Activated CD8-positive, alpha-beta memory T cell treated with anti-CD3 and anti-CD28 coated beads, Interleukin-2, amount 10 ng/mL, durations not matched to agents 7 days and 5 days (primary cell): ENCODE measurements at regions of chr9 and their contacts with region 1.

Region 1: GRCh38 chr9:115013998-115014397 is 83.6 kb upstream of the TNFSF8 start:
- DNase-seq: peak; percentile 88
- ATAC-seq: peak; percentile 97
- H3K4me3 Mint-ChIP-seq: no peak overlapping the region
- H3K27ac Mint-ChIP-seq: peak overlapping the region; percentile 47
- H3K4me1 Mint-ChIP-seq: peaks cover 37% of the 10 kb centered on the region
- H3K27me3 Mint-ChIP-seq: peaks cover 22% of the 10 kb centered on the region

Region 2: GRCh38 chr9:114674798-114675540 is 339.0 kb before region 1 on chr9:
- CTCF ChIA-PET with region 1: interaction called, 186 read pairs
- DNase-seq: no peak
- ATAC-seq: no peak
- H3K4me3 Mint-ChIP-seq: no peak overlapping the region
- H3K27ac Mint-ChIP-seq: no peak overlapping the region
- H3K4me1 Mint-ChIP-seq: peaks cover 25% of the 10 kb centered on the region
- H3K27me3 Mint-ChIP-seq: peaks cover 20% of the 10 kb centered on the region

Region 3: GRCh38 chr9:114738581-114739316 is 275.2 kb before region 1 on chr9:
- CTCF ChIA-PET with region 1: interaction called, 135 read pairs
- DNase-seq: peak; percentile 84
- ATAC-seq: peak; percentile 83
- H3K4me3 Mint-ChIP-seq: no peak overlapping the region
- H3K27ac Mint-ChIP-seq: peak overlapping the region; percentile 89
- H3K4me1 Mint-ChIP-seq: peaks cover 58% of the 10 kb centered on the region
- H3K27me3 Mint-ChIP-seq: peaks cover 5% of the 10 kb centered on the region

Region 4: GRCh38 chr9:114830546-114830945 is 183.5 kb before region 1 on chr9:
- CTCF ChIA-PET with region 1: no interaction called
- DNase-seq: no peak
- ATAC-seq: no peak
- H3K4me3 Mint-ChIP-seq: no peak overlapping the region
- H3K27ac Mint-ChIP-seq: no peak overlapping the region
- H3K4me1 Mint-ChIP-seq: peaks cover 10% of the 10 kb centered on the region
- H3K27me3 Mint-ChIP-seq: peaks cover 13% of the 10 kb centered on the region

Region 5: GRCh38 chr9:114930056-114930812 is 83.8 kb before region 1 on chr9 and contains the start of gene TNFSF8:
- CTCF ChIA-PET with region 1: interaction called, 14 read pairs
- DNase-seq: peak; percentile 91
- ATAC-seq: peak; percentile 82
- H3K4me3 Mint-ChIP-seq: peak within 1 kb of the TSS; percentile 93
- H3K27ac Mint-ChIP-seq: peak within 1 kb of the TSS; percentile 98
- H3K4me1 Mint-ChIP-seq: peaks cover 42% of the 10 kb centered on the region
- H3K27me3 Mint-ChIP-seq: peaks cover 2% of the 10 kb centered on the region
- total RNA-seq, gene TNFSF8: 30.3 to 34.5 TPM

Region 6: DNA sequence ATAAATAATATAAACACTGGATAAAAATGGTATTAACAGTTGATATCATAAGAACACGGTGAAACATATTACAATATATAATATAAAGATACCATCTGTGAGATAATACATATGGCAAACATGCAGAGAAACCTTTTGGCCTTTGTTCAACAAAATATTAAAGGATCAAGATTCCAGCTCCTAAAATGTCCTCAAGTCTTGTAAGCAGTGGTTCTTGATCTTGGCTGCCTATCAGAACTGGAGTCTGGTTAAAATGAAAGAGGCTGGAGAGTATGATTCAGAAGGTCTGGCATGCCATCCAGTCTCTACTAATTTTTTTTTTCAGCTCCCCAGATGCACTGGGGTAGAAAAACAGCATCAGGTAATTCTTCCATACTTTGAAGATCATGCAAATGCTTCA is 20.8 kb after region 1 on chr9:
- CTCF ChIA-PET with region 1: interaction called, 10 read pairs
- DNase-seq: no peak
- ATAC-seq: no peak
- H3K4me3 Mint-ChIP-seq: no peak overlapping the region
- H3K27ac Mint-ChIP-seq: no peak overlapping the region
- H3K4me1 Mint-ChIP-seq: peaks cover 33% of the 10 kb centered on the region
- H3K27me3 Mint-ChIP-seq: peaks cover 15% of the 10 kb centered on the region

Region 7: GRCh38 chr9:115198001-115198400 is 184.0 kb after region 1 on chr9:
- CTCF ChIA-PET with region 1: no interaction called
- DNase-seq: no peak
- ATAC-seq: no peak
- H3K4me3 Mint-ChIP-seq: no peak overlapping the region
- H3K27ac Mint-ChIP-seq: no peak overlapping the region
- H3K4me1 Mint-ChIP-seq: no peaks in the 10 kb centered on the region
- H3K27me3 Mint-ChIP-seq: peaks cover 56% of the 10 kb centered on the region